ENCODE measurements at regions of chr11 and their contacts with region 1.

Region 1: DNA sequence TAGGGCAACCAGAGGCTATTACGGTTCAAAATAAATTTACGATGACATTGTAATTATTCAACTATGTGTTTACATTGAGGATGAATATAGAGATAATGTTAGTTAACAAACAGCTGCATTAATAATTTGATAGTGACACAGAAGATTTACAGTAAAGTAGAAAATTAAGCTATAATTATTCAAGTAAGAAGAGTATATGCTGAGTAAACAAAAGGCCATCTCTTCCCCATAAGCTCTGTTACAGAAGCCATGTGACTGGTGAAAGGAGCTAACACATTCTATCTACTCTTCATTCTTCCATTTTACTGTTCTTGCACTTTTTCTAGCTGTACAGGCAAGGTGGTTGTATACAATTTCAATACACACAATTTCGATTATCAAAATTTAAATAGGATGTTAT is 54.2 kb downstream of the IMMP1L start:
- DNase-seq: no peak
- H3K4me3 Mint-ChIP-seq: no peak overlapping the region
- H3K27ac Mint-ChIP-seq: no peak overlapping the region
- H3K4me1 Mint-ChIP-seq: no peaks in the 10 kb centered on the region
- H3K27me3 Mint-ChIP-seq: no peaks in the 10 kb centered on the region

Region 2: DNA sequence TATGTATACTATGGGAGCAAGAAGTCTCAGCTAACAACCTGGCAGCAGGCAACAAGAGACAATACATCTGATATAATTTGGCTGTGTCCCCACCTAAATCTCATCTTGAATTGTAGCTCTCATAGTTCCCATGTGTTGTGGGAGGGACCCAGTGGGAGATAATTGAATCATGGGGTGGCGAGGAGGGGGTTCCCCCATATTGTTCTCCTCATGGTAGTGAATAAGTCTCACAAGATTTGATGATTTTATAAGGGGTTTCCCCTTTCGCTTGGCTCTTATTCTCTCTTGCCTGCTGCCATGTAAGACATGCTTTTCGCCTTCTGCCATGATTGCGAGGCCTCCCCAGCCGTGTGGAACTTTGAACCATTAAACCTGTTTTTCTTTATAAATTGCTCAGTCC is 79.3 kb before region 1 on chr11:
- intact Hi-C with region 1: loop called (anchors 2 kb)
- DNase-seq: no peak
- H3K4me3 Mint-ChIP-seq: no peak overlapping the region
- H3K27ac Mint-ChIP-seq: no peak overlapping the region
- H3K4me1 Mint-ChIP-seq: peaks cover 7% of the 10 kb centered on the region
- H3K27me3 Mint-ChIP-seq: no peaks in the 10 kb centered on the region

Region 3: DNA sequence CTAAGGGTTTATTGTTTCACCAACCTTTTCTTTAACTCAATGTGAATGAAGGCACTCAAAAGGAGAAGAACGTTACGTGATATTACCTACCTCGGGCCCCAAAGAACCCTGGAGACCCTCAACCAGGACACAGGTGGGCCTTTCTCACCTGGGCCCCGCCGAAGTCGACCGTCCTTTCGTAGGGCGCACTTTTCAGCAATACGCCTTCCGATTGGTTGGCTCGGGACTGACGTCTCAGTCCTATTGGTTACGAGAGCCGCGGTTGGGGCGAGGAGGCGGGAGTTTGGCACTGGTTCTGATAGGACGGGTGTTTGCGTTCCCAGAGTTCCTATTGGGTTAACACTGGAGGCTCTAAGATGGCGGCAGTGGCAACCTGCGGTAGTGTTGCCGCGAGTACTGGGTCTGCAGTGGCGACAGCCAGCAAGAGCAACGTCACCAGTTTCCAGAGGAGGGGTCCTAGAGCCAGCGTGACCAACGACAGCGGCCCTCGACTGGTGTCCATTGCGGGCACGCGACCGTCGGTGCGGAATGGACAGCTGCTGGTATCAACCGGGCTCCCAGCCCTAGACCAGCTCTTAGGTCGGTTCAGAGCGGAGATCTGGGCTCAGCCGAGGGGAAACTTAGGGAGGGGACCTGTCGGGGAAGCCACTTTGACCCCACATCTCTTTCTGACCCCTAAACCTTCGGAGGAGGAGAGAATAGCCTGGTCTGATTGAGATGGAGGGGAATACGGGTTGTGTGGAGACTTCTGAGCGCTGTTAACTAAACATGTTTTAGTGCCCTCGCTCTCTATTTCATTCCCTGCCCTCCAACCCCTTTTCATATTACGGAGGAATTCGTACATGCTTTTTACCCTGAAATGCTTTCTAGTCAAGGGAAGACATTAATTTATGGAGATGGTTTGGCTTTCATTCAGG is 54.5 kb after region 1 on chr11 and contains the starts of genes ELP4 and IMMP1L:
- intact Hi-C with region 1: no loop called
- DNase-seq: peak; percentile 94
- H3K4me3 Mint-ChIP-seq: peak within 1 kb of the TSS; percentile 99
- H3K27ac Mint-ChIP-seq: peak within 1 kb of the TSS; percentile 94
- H3K4me1 Mint-ChIP-seq: peaks cover 47% of the 10 kb centered on the region
- H3K27me3 Mint-ChIP-seq: no peaks in the 10 kb centered on the region
- total RNA-seq, gene ELP4: 15.1 and 17.3 TPM in 2 replicates
- total RNA-seq, gene IMMP1L: 22.3 and 24.6 TPM in 2 replicates

Measured in activated T-helper 1 cell treated with anti-CD3 and anti-CD28 coated beads, Interleukin-12 subunit alpha, Interleukin-12 subunit beta, Interleukin-2, Interleukin-4 antibody, amounts not matched to agents 30 ng/mL and 10 ng/mL and 1 ng/mL, durations not matched to agents 14 hours and 24 hours and 36 hours (primary cell).